Activated B cell treated with CpG ODN at 0.5 μM for 24 hours (primary cell): ENCODE measurements at regions of chr2 and their contacts with region 1.

Region 1: GRCh38 chr2:177148477-177149154 is 64.0 kb upstream of the HNRNPA3 start:
- DNase-seq: peak; percentile 46
- ATAC-seq: peak; percentile 84
- H3K4me3 Mint-ChIP-seq: peak overlapping the region; percentile 89
- H3K27ac Mint-ChIP-seq: peak overlapping the region; percentile 36
- H3K4me1 Mint-ChIP-seq: peaks cover 15% of the 10 kb centered on the region
- H3K27me3 Mint-ChIP-seq: peaks cover 14% of the 10 kb centered on the region
- CTCF ChIP-seq: peak; percentile 36

Region 2: DNA sequence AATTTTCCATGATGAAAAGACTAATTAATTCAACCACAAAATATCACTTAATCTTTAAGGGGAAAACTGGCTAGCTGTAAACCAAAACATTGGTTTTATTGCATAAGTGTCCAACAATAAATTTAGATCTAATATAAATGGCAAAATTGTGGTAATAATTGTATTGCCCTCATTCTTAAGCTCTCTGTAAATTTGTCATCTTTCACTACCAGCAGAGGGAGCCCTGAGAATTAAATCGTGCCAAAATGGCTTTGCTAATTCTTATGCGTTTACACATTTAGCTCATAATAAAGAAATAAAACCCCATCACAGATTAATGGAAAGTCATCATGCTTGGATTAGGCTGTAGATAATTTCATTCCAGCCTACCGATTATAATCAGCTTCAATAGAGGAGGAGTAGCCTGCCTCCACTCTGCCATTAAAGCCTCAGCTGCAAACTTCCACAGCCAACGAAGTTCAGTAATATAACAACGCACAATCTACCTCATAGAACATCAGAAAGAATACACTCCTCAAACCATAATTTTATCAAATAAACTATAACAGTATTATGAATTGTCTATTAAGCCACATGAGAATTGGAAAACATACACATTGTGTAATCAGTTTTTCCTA is 1897.1 kb before region 1 on chr2:
- CTCF ChIA-PET with region 1: no interaction called
- POLR2A ChIA-PET with region 1: no interaction called
- intact Hi-C with region 1: loop called (anchors 2 kb)
- DNase-seq: no peak
- ATAC-seq: no peak
- H3K4me3 Mint-ChIP-seq: no peak overlapping the region
- H3K27ac Mint-ChIP-seq: no peak overlapping the region
- H3K4me1 Mint-ChIP-seq: no peaks in the 10 kb centered on the region
- H3K27me3 Mint-ChIP-seq: peaks cover 17% of the 10 kb centered on the region
- CTCF ChIP-seq: peak; percentile 51

Region 3: GRCh38 chr2:176140513-176141317 is 1007.9 kb before region 1 on chr2:
- CTCF ChIA-PET with region 1: no interaction called
- POLR2A ChIA-PET with region 1: no interaction called
- intact Hi-C with region 1: loop called (anchors 5 kb)
- DNase-seq: peak; percentile 39
- ATAC-seq: peak; percentile 73
- H3K4me3 Mint-ChIP-seq: peak overlapping the region; percentile 28
- H3K27ac Mint-ChIP-seq: no peak overlapping the region
- H3K4me1 Mint-ChIP-seq: peaks cover 17% of the 10 kb centered on the region
- H3K27me3 Mint-ChIP-seq: peaks cover 74% of the 10 kb centered on the region
- CTCF ChIP-seq: no peak

Region 4: GRCh38 chr2:176446718-176447414 is 701.8 kb before region 1 on chr2:
- CTCF ChIA-PET with region 1: no interaction called
- POLR2A ChIA-PET with region 1: no interaction called
- intact Hi-C with region 1: no loop called
- DNase-seq: no peak
- ATAC-seq: no peak
- H3K4me3 Mint-ChIP-seq: no peak overlapping the region
- H3K27ac Mint-ChIP-seq: no peak overlapping the region
- H3K4me1 Mint-ChIP-seq: peaks cover 10% of the 10 kb centered on the region
- H3K27me3 Mint-ChIP-seq: peaks cover 8% of the 10 kb centered on the region
- CTCF ChIP-seq: no peak

Region 5: GRCh38 chr2:176554101-176555048 is 594.2 kb before region 1 on chr2:
- CTCF ChIA-PET with region 1: interaction called, 3 read pairs
- POLR2A ChIA-PET with region 1: no interaction called
- intact Hi-C with region 1: loop called (anchors 10 kb)
- DNase-seq: no peak
- ATAC-seq: peak; percentile 49
- H3K4me3 Mint-ChIP-seq: peak overlapping the region; percentile 71
- H3K27ac Mint-ChIP-seq: no peak overlapping the region
- H3K4me1 Mint-ChIP-seq: peaks cover 11% of the 10 kb centered on the region
- H3K27me3 Mint-ChIP-seq: peaks cover 30% of the 10 kb centered on the region
- CTCF ChIP-seq: peak; percentile 80

Region 6: GRCh38 chr2:176653479-176654443 is 494.9 kb before region 1 on chr2:
- CTCF ChIA-PET with region 1: interaction called, 4 read pairs
- POLR2A ChIA-PET with region 1: no interaction called
- intact Hi-C with region 1: loop called (anchors 5 kb)
- DNase-seq: no peak
- ATAC-seq: peak; percentile 74
- H3K4me3 Mint-ChIP-seq: no peak overlapping the region
- H3K27ac Mint-ChIP-seq: no peak overlapping the region
- H3K4me1 Mint-ChIP-seq: no peaks in the 10 kb centered on the region
- H3K27me3 Mint-ChIP-seq: peaks cover 23% of the 10 kb centered on the region
- CTCF ChIP-seq: no peak

Region 7: DNA sequence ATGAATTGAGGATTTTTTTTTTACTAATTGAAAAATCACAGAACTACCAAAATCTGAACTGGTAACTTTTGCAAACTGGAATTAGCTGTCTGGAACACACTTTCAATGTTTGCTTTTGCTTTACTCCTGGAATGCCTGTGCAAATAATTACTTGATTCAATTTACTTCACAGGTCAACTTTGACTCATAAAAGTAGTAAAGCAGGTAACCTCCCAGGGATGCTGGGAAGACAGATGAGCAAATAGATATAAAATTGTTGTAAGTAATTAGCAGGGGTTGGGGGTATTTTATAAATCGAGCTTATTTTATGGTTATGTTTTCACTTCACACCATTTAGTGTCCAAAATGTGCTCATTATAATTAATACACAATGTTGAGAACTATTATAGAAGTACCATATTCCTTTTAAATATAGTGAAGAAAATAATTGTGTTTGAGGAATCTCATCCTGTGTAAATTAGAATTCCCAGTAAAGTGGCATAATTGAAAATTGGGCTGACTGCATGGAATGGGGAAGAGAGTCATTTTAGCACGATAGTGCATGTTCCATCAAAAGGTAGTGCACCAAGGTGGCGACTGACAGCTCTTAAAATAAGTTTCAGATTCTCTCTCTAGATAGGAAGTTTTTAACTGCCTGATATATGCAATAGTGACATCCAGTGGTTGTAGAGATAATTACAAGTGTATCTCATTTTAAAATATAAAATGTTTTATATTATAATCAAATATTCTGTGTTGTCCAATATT is 334.1 kb before region 1 on chr2:
- CTCF ChIA-PET with region 1: interaction called, 8 read pairs
- POLR2A ChIA-PET with region 1: no interaction called
- intact Hi-C with region 1: loop called (anchors 2 kb)
- DNase-seq: no peak
- ATAC-seq: no peak
- H3K4me3 Mint-ChIP-seq: no peak overlapping the region
- H3K27ac Mint-ChIP-seq: no peak overlapping the region
- H3K4me1 Mint-ChIP-seq: peaks cover 2% of the 10 kb centered on the region
- H3K27me3 Mint-ChIP-seq: peaks cover 3% of the 10 kb centered on the region
- CTCF ChIP-seq: no peak

Region 8: DNA sequence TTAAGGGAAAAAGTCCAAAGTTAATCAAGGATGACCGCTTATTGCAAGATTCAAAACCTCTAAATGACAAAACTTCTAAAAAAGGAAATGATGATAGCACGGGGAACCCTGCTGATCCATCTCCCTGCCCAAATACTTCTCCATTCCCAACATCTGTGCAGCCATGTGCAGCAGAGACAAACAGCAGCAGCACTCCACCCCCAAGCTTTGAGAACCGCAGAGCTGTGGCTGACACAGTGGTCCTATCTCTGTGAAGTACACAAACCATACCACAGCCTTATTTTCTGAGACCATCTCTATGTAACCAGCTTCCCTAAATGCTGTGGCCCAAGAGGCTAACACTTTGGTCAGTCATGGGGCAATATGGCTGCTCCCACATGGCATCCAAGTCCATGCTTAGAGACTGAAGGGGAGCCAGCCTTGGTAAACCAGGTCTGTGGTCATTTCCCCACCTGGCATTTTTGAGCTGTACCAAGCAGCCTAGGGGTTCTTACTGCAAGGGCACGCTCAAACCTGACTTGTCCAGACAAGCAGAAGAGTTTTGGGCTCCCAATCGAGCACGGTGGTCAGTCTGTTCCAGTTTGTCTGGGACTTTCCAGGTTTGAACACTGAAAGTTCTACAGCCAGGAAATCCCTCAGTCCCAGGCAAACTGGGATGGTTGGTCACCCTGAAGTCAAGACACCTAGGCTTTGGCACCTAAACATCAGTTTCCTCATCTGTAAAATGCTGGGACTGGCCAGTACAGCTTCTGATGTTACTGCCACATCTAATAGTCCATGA is 133.0 kb after region 1 on chr2:
- CTCF ChIA-PET with region 1: no interaction called
- POLR2A ChIA-PET with region 1: no interaction called
- intact Hi-C with region 1: no loop called
- DNase-seq: no peak
- ATAC-seq: peak; percentile 81
- H3K4me3 Mint-ChIP-seq: no peak overlapping the region
- H3K27ac Mint-ChIP-seq: no peak overlapping the region
- H3K4me1 Mint-ChIP-seq: peaks cover 35% of the 10 kb centered on the region
- H3K27me3 Mint-ChIP-seq: no peaks in the 10 kb centered on the region
- CTCF ChIP-seq: no peak